KBM-7 (cell line): ENCODE measurements at regions of chr7 and their contacts with region 1.

Region 1: DNA sequence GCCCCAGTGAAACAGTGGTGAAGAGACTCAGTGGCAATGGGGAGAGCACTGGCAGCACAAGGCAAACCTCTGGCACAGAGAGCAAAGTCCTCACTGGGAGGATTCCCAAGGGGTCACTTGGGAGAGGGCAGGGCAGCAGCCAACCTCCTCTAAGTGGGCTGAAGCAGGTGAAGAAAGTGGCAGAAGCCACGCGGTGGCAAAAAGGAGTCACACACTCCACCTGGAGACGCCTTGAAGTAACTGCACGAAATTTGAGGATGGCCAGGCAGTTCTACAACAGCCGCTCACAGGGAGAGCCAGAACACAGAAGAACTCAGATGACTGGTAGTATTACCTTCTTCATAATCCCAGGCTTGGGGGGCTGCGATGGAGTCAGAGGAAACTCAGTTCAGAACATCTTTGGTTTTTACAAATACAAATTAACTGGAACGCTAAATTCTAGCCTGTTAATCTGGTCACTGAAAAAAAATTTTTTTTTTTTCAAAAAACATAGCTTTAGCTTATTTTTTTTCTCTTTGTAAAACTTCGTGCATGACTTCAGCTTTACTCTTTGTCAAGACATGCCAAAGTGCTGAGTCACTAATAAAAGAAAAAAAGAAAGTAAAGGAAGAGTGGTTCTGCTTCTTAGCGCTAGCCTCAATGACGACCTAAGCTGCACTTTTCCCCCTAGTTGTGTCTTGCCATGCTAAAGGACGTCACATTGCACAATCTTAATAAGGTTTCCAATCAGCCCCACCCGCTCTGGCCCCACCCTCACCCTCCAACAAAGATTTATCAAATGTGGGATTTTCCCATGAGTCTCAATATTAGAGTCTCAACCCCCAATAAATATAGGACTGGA is 435 bp upstream of the IL6 start:
- DNase-seq: peak; percentile 68

Region 2: DNA sequence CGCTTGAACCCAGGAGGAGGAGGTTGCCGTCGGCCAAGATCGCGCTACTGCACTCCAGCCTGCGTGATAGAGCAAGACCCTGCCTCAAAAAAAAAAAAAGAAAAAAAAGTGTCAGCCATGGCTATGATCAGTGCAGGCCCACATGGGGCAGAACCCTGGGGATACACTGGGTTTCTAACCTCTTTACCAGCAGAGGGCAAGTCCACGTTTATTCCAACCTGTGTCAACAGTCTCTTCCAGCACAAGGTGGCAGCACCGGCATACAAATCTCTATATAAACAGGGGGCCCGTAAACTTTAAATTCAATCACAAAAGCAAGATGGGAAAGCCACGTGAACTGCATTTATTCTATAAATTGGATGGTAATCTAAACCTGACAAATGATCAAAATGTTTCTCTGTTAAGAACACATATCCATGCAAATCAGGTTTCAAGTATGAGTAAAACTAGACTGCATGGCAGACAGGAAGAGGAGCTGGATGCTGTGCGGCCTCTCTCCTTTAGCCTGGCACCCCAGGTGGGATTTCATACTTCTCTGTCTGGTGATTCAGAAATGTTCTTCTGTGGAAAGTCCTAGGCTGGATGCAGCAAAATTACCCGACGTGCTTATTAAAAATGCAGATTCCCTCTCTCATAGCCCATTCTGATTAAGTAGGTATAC is 166.6 kb before region 1 on chr7:
- in situ Hi-C with region 1: loop called (anchors 10 kb)
- DNase-seq: peak; percentile 74